ENCODE measurements at regions of chr15 and their contacts with region 1.

Region 1: GRCh38 chr15:99051308-99051707 is 43.7 kb upstream of the PGPEP1L start:
- DNase-seq: no peak
- ATAC-seq: no peak
- H3K4me3 ChIP-seq: no peak overlapping the region
- H3K27ac ChIP-seq: no peak overlapping the region
- H3K4me1 ChIP-seq: no peaks in the 10 kb centered on the region
- H3K27me3 ChIP-seq: no peaks in the 10 kb centered on the region
- CTCF ChIP-seq: no peak
- POLR2A ChIP-seq: no peak
- RAD21 ChIP-seq: no peak

Region 2: GRCh38 chr15:98927022-98927421 is 124.3 kb before region 1 on chr15:
- CTCF ChIA-PET with region 1: no interaction called
- POLR2A ChIA-PET with region 1: no interaction called
- RAD21 ChIA-PET with region 1: no interaction called
- intact Hi-C with region 1: no loop called
- DNase-seq: no peak
- ATAC-seq: no peak
- H3K4me3 ChIP-seq: no peak overlapping the region
- H3K27ac ChIP-seq: no peak overlapping the region
- H3K4me1 ChIP-seq: no peaks in the 10 kb centered on the region
- H3K27me3 ChIP-seq: no peaks in the 10 kb centered on the region
- CTCF ChIP-seq: no peak
- POLR2A ChIP-seq: no peak
- RAD21 ChIP-seq: no peak

Region 3: DNA sequence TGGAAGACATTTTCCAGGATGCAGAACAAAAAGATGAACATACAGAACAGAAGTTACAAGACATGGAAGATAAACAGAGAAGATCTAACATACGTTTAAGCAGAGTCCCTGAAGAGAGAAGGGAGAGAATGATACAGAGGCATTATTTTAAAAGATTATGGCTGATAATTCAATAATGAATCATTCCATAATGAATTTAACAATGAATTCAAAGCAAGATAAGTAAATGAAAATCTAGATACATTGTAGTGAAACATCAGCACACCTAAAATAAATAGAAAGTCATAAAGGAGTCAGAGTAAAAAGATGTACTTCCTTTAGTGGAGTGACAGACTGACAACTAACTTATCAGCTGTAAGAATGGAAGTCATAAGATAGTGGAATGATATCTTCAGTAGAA is 13.7 kb before region 1 on chr15:
- CTCF ChIA-PET with region 1: no interaction called
- POLR2A ChIA-PET with region 1: no interaction called
- RAD21 ChIA-PET with region 1: no interaction called
- intact Hi-C with region 1: loop called (anchors 2 kb)
- DNase-seq: no peak
- ATAC-seq: no peak
- H3K4me3 ChIP-seq: no peak overlapping the region
- H3K27ac ChIP-seq: no peak overlapping the region
- H3K4me1 ChIP-seq: no peaks in the 10 kb centered on the region
- H3K27me3 ChIP-seq: peaks cover 4% of the 10 kb centered on the region; the same call in 1 of the 2 replicates
- CTCF ChIP-seq: no peak
- POLR2A ChIP-seq: no peak
- RAD21 ChIP-seq: no peak

Measured in HCT116 (cell line).